IMR-90 (cell line): ENCODE measurements at regions of chr16 and their contacts with region 1.

Region 1: DNA sequence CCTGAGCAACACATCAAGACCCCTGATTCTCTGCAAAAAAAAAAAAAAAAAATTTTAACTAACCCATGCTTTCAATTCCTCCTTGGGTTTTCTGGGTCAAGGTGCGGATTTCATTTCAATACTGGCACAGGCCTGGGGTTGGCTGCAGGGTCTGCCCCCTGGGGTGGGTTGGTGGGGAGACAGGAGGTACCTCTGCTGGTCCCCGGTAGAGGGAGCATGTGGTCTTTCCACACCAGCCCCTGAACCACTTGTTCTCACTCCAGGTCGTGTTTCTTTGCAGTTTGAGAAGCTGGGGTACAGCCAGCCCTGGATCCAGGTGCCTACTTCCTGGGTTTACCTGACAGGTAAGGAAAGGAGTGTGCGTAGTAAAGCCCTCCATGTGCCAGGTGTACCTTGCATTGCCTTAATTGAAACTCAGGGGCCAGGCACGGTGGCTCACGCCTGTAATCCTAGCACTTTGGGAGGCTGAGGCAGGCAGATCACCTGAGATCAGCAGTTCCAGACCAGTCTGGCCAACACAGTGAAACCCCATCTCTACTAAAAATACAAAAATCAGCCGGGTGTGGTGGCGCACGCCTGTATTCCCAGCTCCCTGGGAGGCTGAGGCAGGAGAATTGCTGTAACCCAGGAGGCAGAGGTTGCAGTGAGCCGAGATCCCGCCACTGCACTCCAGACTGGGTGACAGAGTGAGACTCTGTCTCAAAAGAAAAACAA is 21.8 kb downstream of the SDR42E2 start:
- DNase-seq: no peak
- ATAC-seq: no peak
- H3K4me3 ChIP-seq: no peak overlapping the region
- H3K27ac ChIP-seq: no peak overlapping the region
- H3K4me1 ChIP-seq: no peaks in the 10 kb centered on the region
- H3K27me3 ChIP-seq: peaks cover 19% of the 10 kb centered on the region
- CTCF ChIP-seq: no peak; the same call in 1 of the 2 replicates
- POLR2A ChIP-seq: no peak
- RAD21 ChIP-seq: no peak

Region 2: DNA sequence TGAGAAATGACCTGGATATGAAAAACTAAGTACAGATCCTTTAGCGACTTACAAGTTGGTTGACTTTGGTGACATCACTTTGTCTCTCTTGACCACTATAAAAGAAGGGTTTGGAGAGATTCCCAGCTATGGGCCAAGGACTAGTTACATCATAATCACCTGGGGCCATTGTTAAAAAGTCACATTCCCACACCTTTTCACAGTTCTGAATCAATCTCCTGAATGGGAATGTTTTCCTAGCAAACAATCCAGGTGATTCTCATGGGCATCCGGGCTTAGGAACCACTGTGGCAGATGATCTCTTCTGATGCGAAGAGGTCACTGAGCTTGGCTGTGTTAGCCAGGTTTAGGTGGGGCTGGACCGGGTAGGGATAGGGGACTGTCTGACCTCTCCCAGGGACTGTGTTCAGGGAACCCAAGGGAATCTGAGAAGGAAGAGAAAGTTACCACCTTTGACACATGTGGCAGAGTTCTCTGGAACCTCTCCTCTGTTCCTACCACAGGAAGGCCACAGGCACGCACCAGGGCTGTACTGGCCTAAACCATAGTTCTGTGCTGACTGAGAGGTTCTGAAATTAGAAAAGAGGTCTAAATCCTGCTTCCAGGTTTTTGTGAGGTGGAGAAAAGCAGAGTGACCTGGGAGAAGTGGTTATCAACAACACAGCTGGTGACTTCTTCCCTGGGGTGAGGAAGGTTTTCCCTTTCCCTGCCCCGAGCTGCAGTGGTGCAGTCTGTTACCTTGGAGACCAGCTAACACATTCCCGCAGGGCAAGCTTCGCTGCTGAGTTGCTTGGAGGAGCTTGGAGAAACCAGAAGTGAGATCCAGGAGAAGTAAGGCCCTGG is 92.1 kb before region 1 on chr16 and contains the start of gene VWA3A:
- CTCF ChIA-PET with region 1: interaction called, 5 read pairs
- POLR2A ChIA-PET with region 1: no interaction called
- dilution Hi-C with region 1: no loop called
- in situ Hi-C with region 1: loop called (anchors 5 kb)
- intact Hi-C with region 1: no loop called
- DNase-seq: peak; percentile 64
- ATAC-seq: peak; percentile 93
- H3K4me3 ChIP-seq: no peak within 1 kb of the TSS
- H3K27ac ChIP-seq: no peak within 1 kb of the TSS
- H3K4me1 ChIP-seq: peaks cover 7% of the 10 kb centered on the region
- H3K27me3 ChIP-seq: peaks cover 4% of the 10 kb centered on the region; the same call in 1 of the 2 replicates
- CTCF ChIP-seq: no peak
- POLR2A ChIP-seq: no peak
- RAD21 ChIP-seq: no peak
- total RNA-seq, gene VWA3A: not detected in 2 replicates

Region 3: DNA sequence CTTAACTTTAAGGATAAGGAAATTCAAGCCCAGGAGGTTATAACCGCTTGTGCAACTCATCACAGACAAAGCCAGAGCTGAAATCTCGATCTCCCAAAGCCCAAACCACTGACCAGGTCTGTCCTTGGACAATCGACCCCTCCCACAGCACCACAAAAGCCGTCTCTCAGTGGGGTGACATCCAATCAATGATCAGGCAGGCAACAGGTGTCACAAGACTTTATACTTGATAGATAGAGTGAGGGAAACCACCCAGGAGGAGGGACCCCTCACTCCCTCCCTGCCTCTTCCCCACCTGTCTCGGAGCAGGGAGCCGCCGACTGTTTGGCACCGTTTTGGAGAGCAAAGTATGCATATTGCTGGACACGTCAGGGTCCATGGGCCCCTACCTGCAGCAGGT is 36.2 kb before region 1 on chr16:
- CTCF ChIA-PET with region 1: no interaction called
- POLR2A ChIA-PET with region 1: no interaction called
- dilution Hi-C with region 1: no loop called
- in situ Hi-C with region 1: loop called (anchors 5 kb)
- intact Hi-C with region 1: no loop called
- DNase-seq: no peak
- ATAC-seq: no peak
- H3K4me3 ChIP-seq: no peak overlapping the region
- H3K27ac ChIP-seq: no peak overlapping the region
- H3K4me1 ChIP-seq: no peaks in the 10 kb centered on the region
- H3K27me3 ChIP-seq: peaks cover 17% of the 10 kb centered on the region; the same call in 1 of the 2 replicates
- CTCF ChIP-seq: no peak
- POLR2A ChIP-seq: no peak
- RAD21 ChIP-seq: no peak